ENCODE measurements at regions of chr2 and their contacts with region 1.

Region 1: GRCh38 chr2:205766779-205767359 is 84.6 kb downstream of the NRP2 start:
- DNase-seq: peak; percentile 30
- ATAC-seq: no peak
- H3K4me3 ChIP-seq: no peak overlapping the region
- H3K27ac ChIP-seq: no peak overlapping the region
- H3K4me1 ChIP-seq: no peaks in the 10 kb centered on the region
- H3K27me3 ChIP-seq: peaks cover 2% of the 10 kb centered on the region; the same call in 1 of the 2 replicates
- CTCF ChIP-seq: peak; percentile 93

Region 2: GRCh38 chr2:205814039-205814364 is 47.1 kb after region 1 on chr2:
- CTCF ChIA-PET with region 1: no interaction called
- POLR2A ChIA-PET with region 1: no interaction called
- in situ Hi-C with region 1: no loop called
- intact Hi-C with region 1: loop called (anchors 5 kb)
- DNase-seq: no peak
- ATAC-seq: no peak
- H3K4me3 ChIP-seq: no peak overlapping the region
- H3K27ac ChIP-seq: no peak overlapping the region
- H3K4me1 ChIP-seq: no peaks in the 10 kb centered on the region
- H3K27me3 ChIP-seq: peaks cover 5% of the 10 kb centered on the region
- CTCF ChIP-seq: no peak

Region 3: GRCh38 chr2:205885492-205886099 is 118.7 kb after region 1 on chr2:
- CTCF ChIA-PET with region 1: no interaction called
- POLR2A ChIA-PET with region 1: no interaction called
- in situ Hi-C with region 1: no loop called
- intact Hi-C with region 1: loop called (anchors 2 kb)
- DNase-seq: peak; percentile 30
- ATAC-seq: peak; percentile 99
- H3K4me3 ChIP-seq: no peak overlapping the region
- H3K27ac ChIP-seq: no peak overlapping the region
- H3K4me1 ChIP-seq: no peaks in the 10 kb centered on the region
- H3K27me3 ChIP-seq: no peaks in the 10 kb centered on the region; the same call in 1 of the 2 replicates
- CTCF ChIP-seq: peak; percentile 93

Region 4: GRCh38 chr2:205902056-205902899 is 135.4 kb after region 1 on chr2:
- CTCF ChIA-PET with region 1: no interaction called
- POLR2A ChIA-PET with region 1: no interaction called
- in situ Hi-C with region 1: no loop called
- intact Hi-C with region 1: no loop called
- DNase-seq: no peak
- ATAC-seq: no peak
- H3K4me3 ChIP-seq: no peak overlapping the region
- H3K27ac ChIP-seq: no peak overlapping the region
- H3K4me1 ChIP-seq: no peaks in the 10 kb centered on the region
- H3K27me3 ChIP-seq: peaks cover 2% of the 10 kb centered on the region; the same call in 1 of the 2 replicates
- CTCF ChIP-seq: no peak

Region 5: DNA sequence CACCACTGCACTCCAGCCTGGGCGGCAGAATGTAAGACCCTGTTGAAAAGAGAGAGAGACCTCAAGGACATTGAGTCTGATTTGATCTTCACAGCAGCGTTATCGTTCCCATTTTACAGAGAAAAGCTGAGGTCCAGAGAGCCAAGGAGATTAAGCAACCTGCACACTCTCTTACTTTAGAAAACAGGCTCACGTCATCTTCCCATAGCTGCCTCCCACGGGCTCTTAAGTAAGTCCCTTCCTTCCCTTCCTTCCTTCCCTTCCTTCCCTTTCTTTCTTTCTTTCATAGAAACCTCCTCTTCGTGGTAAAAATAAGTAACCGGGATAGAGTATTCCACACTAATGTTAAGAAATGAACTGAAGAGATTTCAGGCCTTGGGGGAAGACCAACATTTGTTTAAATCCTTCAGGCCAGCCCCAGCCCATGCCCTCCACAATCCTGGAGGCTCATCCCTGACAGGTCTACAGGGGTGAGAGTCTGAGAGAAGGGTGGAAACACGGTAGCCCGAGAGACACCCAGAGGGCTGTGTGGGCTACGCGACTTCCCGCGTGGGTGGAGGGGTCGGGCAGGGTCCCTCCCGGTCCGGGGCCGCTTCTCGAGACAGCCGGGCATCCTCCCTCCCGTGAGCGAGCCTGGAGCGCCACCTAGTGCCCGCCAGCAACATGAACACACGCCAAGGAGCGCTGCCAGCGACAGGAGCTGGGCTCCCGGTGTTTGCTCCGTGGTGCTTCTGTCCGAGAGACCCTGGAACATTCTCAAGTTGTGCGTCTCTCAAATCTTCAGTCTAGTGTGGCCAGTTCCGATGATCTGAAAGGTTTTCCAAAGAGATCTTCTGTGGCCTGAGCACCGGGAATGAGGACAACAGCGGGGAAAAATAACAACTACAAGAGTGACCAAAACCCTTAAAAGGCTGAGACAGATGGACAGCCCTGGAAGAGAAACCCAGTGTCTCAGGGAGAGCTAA is 158.8 kb after region 1 on chr2:
- CTCF ChIA-PET with region 1: no interaction called
- POLR2A ChIA-PET with region 1: no interaction called
- in situ Hi-C with region 1: no loop called
- intact Hi-C with region 1: loop called (anchors 2 kb)
- DNase-seq: no peak
- ATAC-seq: peak; percentile 95
- H3K4me3 ChIP-seq: peak overlapping the region in 1 of 2 experiments; percentile 19; a peak in 1 of 4 replicates
- H3K27ac ChIP-seq: no peak overlapping the region
- H3K4me1 ChIP-seq: no peaks in the 10 kb centered on the region
- H3K27me3 ChIP-seq: peaks cover 19% of the 10 kb centered on the region
- CTCF ChIP-seq: peak; percentile 95